ENCODE measurements at regions of chr2 and their contacts with region 1.

Region 1: GRCh38 chr2:102251042-102251848 is 60.1 kb upstream of the IL1RL1 start:
- DNase-seq: peak; percentile 67
- H3K4me3 Mint-ChIP-seq: peak overlapping the region; percentile 73
- H3K27ac Mint-ChIP-seq: peak overlapping the region; percentile 78
- H3K4me1 Mint-ChIP-seq: peaks cover 45% of the 10 kb centered on the region
- H3K27me3 Mint-ChIP-seq: peaks cover 11% of the 10 kb centered on the region

Region 2: GRCh38 chr2:101921319-101921952 is 329.8 kb before region 1 on chr2:
- CTCF ChIA-PET with region 1: no interaction called
- DNase-seq: no peak
- H3K4me3 Mint-ChIP-seq: no peak overlapping the region
- H3K27ac Mint-ChIP-seq: no peak overlapping the region
- H3K4me1 Mint-ChIP-seq: no peaks in the 10 kb centered on the region
- H3K27me3 Mint-ChIP-seq: peaks cover 6% of the 10 kb centered on the region

Region 3: GRCh38 chr2:102235491-102235890 is 15.8 kb before region 1 on chr2:
- CTCF ChIA-PET with region 1: interaction called, 26 read pairs
- DNase-seq: peak; percentile 56
- H3K4me3 Mint-ChIP-seq: no peak overlapping the region
- H3K27ac Mint-ChIP-seq: no peak overlapping the region
- H3K4me1 Mint-ChIP-seq: peaks cover 37% of the 10 kb centered on the region
- H3K27me3 Mint-ChIP-seq: peaks cover 3% of the 10 kb centered on the region

Region 4: DNA sequence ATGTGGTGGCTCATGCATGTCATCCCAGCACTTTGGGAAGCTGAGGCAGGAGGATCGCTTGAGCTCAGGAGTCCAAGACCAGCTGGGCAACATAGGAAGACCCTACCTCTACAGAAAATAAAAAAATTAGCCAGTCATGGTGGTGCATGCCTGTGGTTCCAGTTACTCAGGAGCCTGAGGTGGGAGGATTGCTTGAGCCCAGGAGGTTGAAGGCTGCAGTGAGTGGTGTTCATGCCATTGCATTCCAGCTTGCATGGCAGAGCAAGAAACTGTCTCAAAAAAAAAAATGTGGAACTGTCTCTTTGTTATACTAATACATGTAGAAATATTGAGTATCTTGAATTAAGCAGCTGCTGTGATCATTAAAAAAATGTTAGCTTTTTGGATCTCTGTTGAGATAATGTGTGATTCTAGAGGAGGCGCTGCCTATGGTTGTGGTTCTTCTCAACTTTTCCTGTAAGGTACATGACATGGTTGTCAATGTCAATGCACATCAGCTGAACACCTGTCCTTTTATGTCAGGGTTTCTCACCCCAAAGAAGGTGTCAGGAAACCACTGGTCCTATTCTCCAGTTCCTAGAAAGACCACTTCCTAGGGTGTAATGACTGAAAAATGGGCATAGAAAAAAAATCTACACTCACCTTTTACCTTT is 25.4 kb after region 1 on chr2:
- CTCF ChIA-PET with region 1: interaction called, 18 read pairs
- DNase-seq: peak; percentile 52
- H3K4me3 Mint-ChIP-seq: peak overlapping the region; percentile 38
- H3K27ac Mint-ChIP-seq: peak overlapping the region; percentile 88
- H3K4me1 Mint-ChIP-seq: peaks cover 79% of the 10 kb centered on the region
- H3K27me3 Mint-ChIP-seq: no peaks in the 10 kb centered on the region

Region 5: GRCh38 chr2:102301867-102302362 is 50.7 kb after region 1 on chr2:
- CTCF ChIA-PET with region 1: interaction called, 10 read pairs
- DNase-seq: peak; percentile 63
- H3K4me3 Mint-ChIP-seq: no peak overlapping the region
- H3K27ac Mint-ChIP-seq: peak overlapping the region; percentile 39
- H3K4me1 Mint-ChIP-seq: peaks cover 38% of the 10 kb centered on the region
- H3K27me3 Mint-ChIP-seq: no peaks in the 10 kb centered on the region

Region 6: DNA sequence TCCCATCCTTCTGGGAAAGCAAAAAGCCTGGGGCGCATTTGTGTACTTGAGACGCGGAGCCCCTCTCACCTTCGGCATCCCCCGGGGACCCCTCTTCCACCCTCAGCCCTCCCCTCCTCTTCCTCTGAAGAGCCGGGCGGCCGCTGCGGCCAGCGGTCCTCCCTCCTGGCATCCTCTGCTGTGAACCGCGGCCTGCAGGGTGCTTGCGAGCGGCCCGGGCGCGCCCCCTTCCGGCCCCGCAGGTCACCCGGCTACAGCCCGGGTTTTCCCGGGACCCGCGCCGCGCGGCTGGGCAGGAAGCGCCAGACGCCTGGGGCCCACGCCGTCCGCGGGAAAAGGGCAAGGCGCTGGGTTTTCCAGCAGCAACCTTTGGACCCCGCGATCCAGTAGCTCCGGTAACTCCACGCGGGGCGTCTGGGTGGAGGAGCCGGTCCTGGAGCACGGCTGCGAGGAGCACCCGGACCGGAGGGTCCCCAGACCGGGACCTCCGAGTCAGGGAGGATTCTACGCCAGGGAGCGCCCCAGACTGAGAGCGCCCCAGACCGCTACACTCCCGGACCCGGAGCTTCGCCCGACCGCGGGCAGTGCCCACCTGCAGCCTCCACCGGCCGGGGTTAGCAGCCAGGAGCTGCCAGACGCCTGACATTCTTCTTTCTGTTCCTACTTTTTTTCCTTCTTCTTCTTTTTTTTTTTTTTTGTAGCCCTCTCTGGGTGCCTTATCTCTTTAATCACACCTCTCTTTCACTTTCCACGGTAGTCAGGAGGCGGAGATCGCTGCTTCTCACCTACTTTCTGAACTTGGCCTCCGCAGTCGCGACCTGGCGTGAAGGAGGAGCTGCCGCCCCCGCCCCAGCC is 104.5 kb after region 1 on chr2 and contains the start of gene IL18R1:
- CTCF ChIA-PET with region 1: interaction called, 19 read pairs
- DNase-seq: peak; percentile 80
- H3K4me3 Mint-ChIP-seq: peak within 1 kb of the TSS; percentile 100
- H3K27ac Mint-ChIP-seq: peak within 1 kb of the TSS; percentile 95
- H3K4me1 Mint-ChIP-seq: peaks cover 49% of the 10 kb centered on the region
- H3K27me3 Mint-ChIP-seq: peaks cover 4% of the 10 kb centered on the region

Region 7: DNA sequence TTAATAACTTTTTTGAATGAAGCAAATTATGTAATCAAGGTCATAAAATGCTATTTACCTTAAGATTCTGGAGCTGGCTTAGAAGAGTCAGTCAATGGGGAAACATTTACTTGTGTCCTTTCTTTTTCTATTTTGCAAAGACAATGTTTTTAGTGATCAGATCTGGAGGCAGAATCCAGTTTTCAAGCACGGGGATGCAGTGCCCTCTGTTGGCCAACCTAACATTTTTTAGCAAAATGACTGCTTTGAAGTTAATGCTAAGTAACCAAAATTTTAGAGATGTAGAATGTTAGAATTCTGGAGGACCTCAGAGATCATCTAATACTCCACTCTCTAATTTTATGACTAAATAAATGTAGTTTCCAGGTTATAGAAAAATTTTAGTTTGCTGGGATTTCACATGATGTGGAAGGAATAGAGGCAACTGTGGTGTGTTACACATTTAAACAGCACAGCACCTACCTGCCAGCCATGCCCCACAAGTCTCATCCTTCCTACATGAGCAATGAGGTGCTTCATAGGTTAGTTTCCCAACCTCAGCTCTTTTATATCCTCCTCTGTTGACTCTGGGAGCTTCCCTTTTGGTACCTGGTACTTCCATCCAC is 198.2 kb after region 1 on chr2:
- CTCF ChIA-PET with region 1: interaction called, 63 read pairs
- DNase-seq: peak; percentile 82
- H3K4me3 Mint-ChIP-seq: no peak overlapping the region
- H3K27ac Mint-ChIP-seq: no peak overlapping the region
- H3K4me1 Mint-ChIP-seq: peaks cover 15% of the 10 kb centered on the region
- H3K27me3 Mint-ChIP-seq: no peaks in the 10 kb centered on the region